Right ventricle myocardium inferior (tissue), 1 donor: ENCODE measurements at regions of chr17 and their contacts with region 1.

Region 1: GRCh38 chr17:14427900-14428647 is 127.2 kb downstream of the HS3ST3B1 start:
- DNase-seq: no peak
- ATAC-seq: no peak

Region 2: DNA sequence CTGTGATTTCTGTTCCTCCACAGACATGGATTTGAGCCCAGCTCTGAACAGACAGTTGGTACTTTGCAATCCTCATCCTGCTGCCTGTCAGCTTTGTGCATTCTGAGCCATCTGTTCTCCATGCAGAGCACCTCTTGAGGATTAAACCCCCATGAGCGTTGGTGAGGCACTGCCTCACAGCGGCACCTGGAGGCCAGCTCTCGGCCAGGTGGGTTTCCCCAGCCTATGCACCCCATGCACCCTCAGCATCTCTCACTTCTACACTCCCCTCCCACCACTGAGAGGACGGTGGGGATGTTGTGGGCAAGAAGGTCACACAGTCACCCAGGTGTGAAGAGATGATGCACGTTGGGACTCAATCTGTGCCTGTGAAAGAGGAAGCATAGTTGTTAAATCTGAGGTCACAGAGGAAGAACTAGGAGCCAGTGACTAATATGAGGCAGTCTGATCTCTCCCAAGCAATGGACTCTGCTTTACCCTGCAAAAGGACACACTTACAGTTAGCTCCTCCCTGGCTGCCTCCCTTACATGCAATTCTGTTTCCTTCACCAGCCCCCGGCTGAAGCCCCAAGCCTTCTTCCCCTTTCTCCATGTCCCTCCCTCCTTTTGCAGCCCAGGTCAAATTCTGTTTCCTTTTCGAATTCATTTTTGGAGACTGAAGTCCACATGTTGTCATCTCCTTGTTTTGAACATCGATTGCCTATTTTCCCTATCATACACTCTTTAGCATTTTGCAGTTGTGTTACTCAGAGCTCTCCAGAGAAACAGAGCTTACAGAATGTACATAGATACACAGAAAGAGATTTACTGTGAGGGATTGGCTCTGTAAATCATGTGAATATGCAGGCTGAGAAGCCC is 68.7 kb before region 1 on chr17:
- intact Hi-C with region 1: loop called (anchors 10 kb)
- DNase-seq: no peak
- ATAC-seq: peak; percentile 39